Naive thymus-derived CD4-positive, alpha-beta T cell (primary cell): ENCODE measurements at regions of chr13 and their contacts with region 1.

Region 1: GRCh38 chr13:76980075-76980718 is 11.7 kb upstream of the CLN5 start:
- DNase-seq: peak; percentile 66 to 93 (median 82)
- ATAC-seq: peak; percentile 100
- H3K4me3 ChIP-seq: no peak overlapping the region
- H3K4me3 Mint-ChIP-seq: peak overlapping the region; percentile 25 to 78 (median 64)
- H3K27ac ChIP-seq: no peak overlapping the region
- H3K27ac Mint-ChIP-seq: no peak overlapping the region
- H3K4me1 ChIP-seq: peaks cover 0 to 5% of the 10 kb centered on the region in 2 donors
- H3K4me1 Mint-ChIP-seq: peaks cover 6 to 14% (median 9%) of the 10 kb centered on the region in 7 donors
- H3K27me3 ChIP-seq: no peaks in the 10 kb centered on the region
- H3K27me3 Mint-ChIP-seq: peaks cover 0 to 48% (median 24%) of the 10 kb centered on the region in 5 donors

Region 2: DNA sequence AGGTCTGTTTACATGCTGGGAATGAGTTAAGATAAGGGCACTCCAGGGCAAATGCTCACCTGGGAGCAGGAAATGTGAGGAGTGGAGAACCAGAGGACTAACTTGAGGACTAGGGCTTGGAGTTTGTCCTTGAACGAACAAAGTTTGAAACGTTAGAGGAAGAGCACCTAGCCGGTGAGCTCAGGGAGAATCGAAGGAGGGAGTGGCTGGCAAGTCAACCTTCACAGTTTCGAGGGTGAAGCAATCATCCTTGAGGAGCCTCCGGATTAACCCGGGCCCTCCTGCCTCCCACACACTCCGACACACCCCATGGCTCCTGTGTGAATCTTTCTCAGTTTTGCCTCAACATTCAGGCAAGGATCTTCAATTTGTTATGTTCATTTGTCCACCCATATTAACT is 1285.5 kb before region 1 on chr13:
- CTCF ChIA-PET with region 1: no interaction called
- POLR2A ChIA-PET with region 1: no interaction called
- intact Hi-C with region 1: loop called in 1 of 2 experiments (anchors 5 kb)
- DNase-seq: no peak
- ATAC-seq: no peak
- H3K4me3 ChIP-seq: no peak overlapping the region
- H3K4me3 Mint-ChIP-seq: peak overlapping the region in 1 of 10 donors; percentile 1
- H3K27ac ChIP-seq: no peak overlapping the region
- H3K27ac Mint-ChIP-seq: no peak overlapping the region
- H3K4me1 ChIP-seq: no peaks in the 10 kb centered on the region
- H3K4me1 Mint-ChIP-seq: peaks cover 0 to 4% (median 0%) of the 10 kb centered on the region in 7 donors
- H3K27me3 ChIP-seq: no peaks in the 10 kb centered on the region
- H3K27me3 Mint-ChIP-seq: no peaks in the 10 kb centered on the region

Region 3: GRCh38 chr13:76822698-76823267 is 157.4 kb before region 1 on chr13:
- CTCF ChIA-PET with region 1: interaction called, 3 read pairs
- POLR2A ChIA-PET with region 1: interaction called, 3 read pairs
- intact Hi-C with region 1: loop called in 1 of 2 experiments (anchors 1 kb)
- DNase-seq: peak in 6 of 9 donors; percentile 5 to 36 (median 22)
- ATAC-seq: peak; percentile 52
- H3K4me3 ChIP-seq: no peak overlapping the region
- H3K4me3 Mint-ChIP-seq: no peak overlapping the region
- H3K27ac ChIP-seq: no peak overlapping the region
- H3K27ac Mint-ChIP-seq: no peak overlapping the region
- H3K4me1 ChIP-seq: no peaks in the 10 kb centered on the region
- H3K4me1 Mint-ChIP-seq: peaks cover 0 to 3% (median 0%) of the 10 kb centered on the region in 7 donors
- H3K27me3 ChIP-seq: no peaks in the 10 kb centered on the region
- H3K27me3 Mint-ChIP-seq: peaks cover 0 to 7% (median 0%) of the 10 kb centered on the region in 5 donors

Region 4: GRCh38 chr13:76950101-76950500 is 30.1 kb before region 1 on chr13:
- CTCF ChIA-PET with region 1: no interaction called
- POLR2A ChIA-PET with region 1: no interaction called
- intact Hi-C with region 1: no loop called
- DNase-seq: no peak
- ATAC-seq: no peak
- H3K4me3 ChIP-seq: no peak overlapping the region
- H3K4me3 Mint-ChIP-seq: no peak overlapping the region
- H3K27ac ChIP-seq: no peak overlapping the region
- H3K27ac Mint-ChIP-seq: no peak overlapping the region
- H3K4me1 ChIP-seq: no peaks in the 10 kb centered on the region
- H3K4me1 Mint-ChIP-seq: peaks cover 0 to 2% (median 0%) of the 10 kb centered on the region in 7 donors
- H3K27me3 ChIP-seq: no peaks in the 10 kb centered on the region
- H3K27me3 Mint-ChIP-seq: peaks cover 7 to 36% (median 23%) of the 10 kb centered on the region in 5 donors

Region 5: DNA sequence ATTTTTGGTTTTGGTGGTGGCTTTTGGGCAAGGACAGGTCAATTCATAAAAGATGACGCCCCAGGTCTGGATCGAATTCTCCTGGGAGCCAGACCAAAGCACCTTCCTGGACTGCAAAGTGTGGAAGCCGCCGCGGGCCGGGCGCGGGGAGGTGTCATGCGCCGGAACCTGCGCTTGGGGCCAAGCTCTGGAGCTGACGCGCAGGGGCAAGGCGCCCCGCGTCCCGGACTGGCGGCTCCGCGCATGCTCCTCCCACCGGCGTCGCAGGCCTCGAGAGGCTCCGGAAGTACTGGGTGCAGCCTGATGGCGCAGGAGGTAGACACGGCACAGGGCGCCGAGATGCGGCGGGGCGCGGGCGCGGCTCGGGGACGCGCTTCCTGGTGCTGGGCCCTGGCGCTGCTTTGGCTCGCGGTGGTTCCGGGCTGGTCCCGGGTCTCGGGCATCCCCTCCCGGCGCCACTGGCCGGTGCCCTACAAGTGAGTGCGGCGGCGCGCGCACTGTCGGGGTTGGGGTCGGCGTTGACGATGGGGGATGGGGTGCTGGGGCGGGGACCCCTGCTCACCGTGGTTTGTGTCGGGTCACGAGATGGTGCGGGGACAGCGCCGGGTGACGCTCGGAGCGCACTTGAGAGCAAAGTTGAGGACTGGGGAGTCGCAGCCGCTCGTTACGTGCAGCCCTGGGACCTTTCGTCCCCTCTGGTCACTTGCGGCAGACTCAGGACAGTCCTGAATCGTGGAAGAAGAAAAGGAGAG is 11.8 kb after region 1 on chr13 and contains the start of gene CLN5:
- CTCF ChIA-PET with region 1: interaction called, 3 read pairs
- POLR2A ChIA-PET with region 1: interaction called, 14 read pairs
- intact Hi-C with region 1: loop called (anchors 1 kb)
- DNase-seq: peak; percentile 93 to 98 (median 96)
- ATAC-seq: peak; percentile 92
- H3K4me3 ChIP-seq: peak within 1 kb of the TSS; percentile 87
- H3K4me3 Mint-ChIP-seq: peak within 1 kb of the TSS; percentile 88 to 99 (median 96)
- H3K27ac ChIP-seq: peak within 1 kb of the TSS; percentile 96
- H3K27ac Mint-ChIP-seq: peak within 1 kb of the TSS; percentile 96 to 99 (median 99)
- H3K4me1 ChIP-seq: peaks cover 12 to 19% of the 10 kb centered on the region in 2 donors
- H3K4me1 Mint-ChIP-seq: peaks cover 27 to 59% (median 53%) of the 10 kb centered on the region in 7 donors
- H3K27me3 ChIP-seq: peaks cover 0 to 3% of the 10 kb centered on the region in 2 donors
- H3K27me3 Mint-ChIP-seq: peaks cover 0 to 12% (median 0%) of the 10 kb centered on the region in 5 donors
- total RNA-seq, gene CLN5: 18.9 to 45.3 (median 27.7) TPM

Region 6: DNA sequence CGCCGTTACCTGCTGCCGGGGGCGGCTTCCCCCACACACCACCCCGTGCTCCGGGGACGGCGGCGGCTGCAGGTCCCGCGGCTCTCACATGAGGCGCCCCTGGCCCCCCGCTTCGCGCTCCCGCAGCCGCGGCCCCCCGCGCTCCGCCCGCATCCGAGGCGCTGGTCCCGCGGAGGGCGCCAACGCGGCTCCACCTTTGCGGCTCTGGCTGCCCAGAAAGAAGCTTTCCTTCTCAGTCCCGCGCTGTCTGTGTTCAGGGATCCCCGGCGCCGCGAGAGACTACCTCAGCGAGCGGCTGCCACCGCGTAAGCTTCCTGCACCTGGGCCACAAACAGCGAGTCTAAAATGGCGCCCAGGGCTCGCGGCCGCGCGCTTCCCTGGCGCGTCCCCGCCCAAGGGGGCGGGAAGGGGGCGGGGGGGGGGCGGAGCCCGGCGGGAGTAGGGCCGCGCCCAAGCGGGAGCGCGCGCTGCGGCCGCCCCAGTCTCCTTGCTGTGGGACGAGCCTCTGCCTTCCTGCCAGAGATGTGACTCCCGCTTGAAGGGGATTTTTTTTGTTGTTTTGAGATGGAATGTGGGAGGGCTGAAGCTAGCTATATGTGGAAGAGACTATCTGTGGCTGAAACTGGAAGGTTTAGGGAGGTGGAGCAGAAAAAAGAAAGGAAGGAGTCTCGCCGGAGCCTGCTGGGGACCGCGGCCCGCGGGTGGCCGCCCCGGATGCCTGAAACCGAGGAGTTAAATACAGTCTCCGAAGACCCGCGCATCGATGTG is 46.8 kb after region 1 on chr13 and contains the start of gene FBXL3:
- CTCF ChIA-PET with region 1: no interaction called
- POLR2A ChIA-PET with region 1: interaction called, 7 read pairs
- intact Hi-C with region 1: loop called in 1 of 2 experiments (anchors 1 kb)
- DNase-seq: peak; percentile 77 to 88 (median 84)
- ATAC-seq: peak; percentile 90
- H3K4me3 ChIP-seq: peak within 1 kb of the TSS; percentile 87
- H3K4me3 Mint-ChIP-seq: peak within 1 kb of the TSS; percentile 93 to 100 (median 98)
- H3K27ac ChIP-seq: peak within 1 kb of the TSS; percentile 100
- H3K27ac Mint-ChIP-seq: peak within 1 kb of the TSS; percentile 92 to 99 (median 94)
- H3K4me1 ChIP-seq: peaks cover 30 to 35% of the 10 kb centered on the region in 2 donors
- H3K4me1 Mint-ChIP-seq: peaks cover 36 to 61% (median 51%) of the 10 kb centered on the region in 7 donors
- H3K27me3 ChIP-seq: no peaks in the 10 kb centered on the region
- H3K27me3 Mint-ChIP-seq: peaks cover 0 to 6% (median 3%) of the 10 kb centered on the region in 5 donors
- total RNA-seq, gene FBXL3: 44.2 to 94.2 (median 70.8) TPM